ENCODE measurements at regions of chr9 and their contacts with region 1.

Region 1: DNA sequence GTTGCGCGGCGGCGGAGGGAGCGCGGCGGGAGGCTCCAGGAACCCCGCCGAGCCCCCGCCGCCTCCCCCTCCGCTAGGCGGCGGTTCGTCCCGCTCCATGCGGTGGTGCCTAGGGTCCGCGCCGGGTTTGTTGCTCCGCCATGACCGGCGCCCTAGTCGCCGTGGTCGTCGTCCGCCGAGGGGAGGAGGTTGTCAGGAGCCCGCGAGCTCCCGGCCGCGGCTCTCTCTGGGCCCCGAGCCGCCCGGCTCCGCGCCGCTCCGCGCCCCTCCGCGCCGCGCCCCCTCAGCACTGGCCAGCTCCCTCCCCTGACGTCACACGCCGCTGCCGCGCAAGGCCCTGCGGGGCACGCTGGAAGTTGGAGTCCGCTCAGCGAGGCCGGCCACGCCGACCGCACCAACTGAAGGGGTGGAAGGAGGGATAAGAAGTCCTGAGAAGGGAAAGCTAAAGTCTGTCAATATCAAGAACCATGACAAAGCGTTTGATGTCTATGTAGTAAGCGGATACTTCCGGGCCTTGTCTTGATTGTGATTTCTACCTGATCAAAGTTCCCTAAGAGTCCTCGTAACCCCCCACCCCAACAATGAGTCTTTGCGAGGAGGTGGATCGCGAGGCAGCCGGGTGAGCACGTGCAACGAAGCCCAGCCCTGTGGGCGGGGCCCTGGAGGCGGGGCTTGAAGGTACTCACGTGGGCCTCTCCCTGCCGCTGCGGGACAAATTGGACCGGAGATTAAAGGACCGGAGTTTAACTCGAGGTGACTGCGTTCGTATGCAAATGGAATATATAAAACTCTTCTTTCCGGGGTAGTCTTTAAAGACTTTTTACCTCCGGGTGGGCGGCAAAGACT is at the start of gene NR6A1:
- DNase-seq: peak; percentile 63
- H3K4me3 ChIP-seq: peak within 1 kb of the TSS; percentile 65
- CTCF ChIP-seq: peak; percentile 35

Region 2: DNA sequence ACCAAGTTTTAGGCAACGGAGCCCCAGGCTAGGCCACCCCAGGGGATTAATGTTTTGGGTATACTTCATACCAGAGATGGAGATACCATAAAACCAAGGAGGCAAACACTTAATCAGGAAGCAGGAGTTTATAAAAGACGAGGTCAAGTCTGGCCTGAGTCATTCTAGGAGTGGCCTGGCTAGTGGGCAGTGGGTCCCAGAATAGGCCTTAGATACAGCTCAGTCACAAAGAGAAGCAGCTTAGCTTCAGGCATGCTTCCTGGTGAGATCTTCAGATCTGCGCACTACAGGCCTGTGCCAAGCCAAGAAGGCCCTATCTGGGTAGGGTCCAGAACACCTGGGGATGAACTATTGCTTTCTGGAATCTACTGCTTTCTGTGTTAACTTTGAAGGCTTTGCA is 243.5 kb before region 1 on chr9:
- CTCF ChIA-PET with region 1: no interaction called
- POLR2A ChIA-PET with region 1: no interaction called
- DNase-seq: no peak
- H3K4me3 ChIP-seq: no peak overlapping the region
- CTCF ChIP-seq: no peak

Region 3: GRCh38 chr9:124754289-124754688 is 17.0 kb before region 1 on chr9:
- CTCF ChIA-PET with region 1: interaction called, 34 read pairs
- POLR2A ChIA-PET with region 1: no interaction called
- DNase-seq: no peak
- H3K4me3 ChIP-seq: no peak overlapping the region
- CTCF ChIP-seq: peak; percentile 62

Region 4: DNA sequence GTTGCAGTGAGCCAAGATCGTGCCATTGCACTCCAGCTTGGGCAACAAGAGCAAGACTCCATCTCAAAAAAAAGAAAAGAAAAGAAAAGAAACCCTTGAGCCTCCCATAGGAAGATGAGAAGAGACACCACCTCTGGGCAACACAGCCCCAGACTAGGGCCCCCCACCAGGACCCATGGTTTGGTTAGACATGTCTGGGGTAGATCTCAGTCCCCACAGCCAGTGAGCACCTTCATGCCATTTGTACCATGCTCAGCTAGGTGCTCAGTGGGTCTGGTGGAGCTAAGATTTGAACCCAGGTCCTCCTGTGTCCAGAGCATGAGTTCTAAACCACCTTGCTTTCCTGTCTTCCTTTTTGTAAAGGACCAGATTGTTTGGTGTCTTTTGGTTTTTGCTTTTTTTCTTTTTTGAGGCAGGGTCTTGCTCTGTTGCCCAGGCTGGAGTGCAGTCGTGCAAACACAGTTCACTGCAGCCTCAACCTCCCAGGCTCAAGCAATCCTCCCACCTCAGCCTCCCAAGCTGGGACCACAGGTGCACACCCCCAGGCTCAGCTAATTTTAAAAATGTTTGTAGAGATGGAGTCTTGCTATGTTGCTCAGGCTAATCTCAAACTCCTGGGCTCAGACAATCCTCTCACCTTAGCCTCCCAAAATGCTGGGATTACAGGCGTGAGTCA is 17.4 kb after region 1 on chr9:
- CTCF ChIA-PET with region 1: interaction called, 138 read pairs
- POLR2A ChIA-PET with region 1: no interaction called
- DNase-seq: no peak
- H3K4me3 ChIP-seq: no peak overlapping the region
- CTCF ChIP-seq: no peak

Region 5: DNA sequence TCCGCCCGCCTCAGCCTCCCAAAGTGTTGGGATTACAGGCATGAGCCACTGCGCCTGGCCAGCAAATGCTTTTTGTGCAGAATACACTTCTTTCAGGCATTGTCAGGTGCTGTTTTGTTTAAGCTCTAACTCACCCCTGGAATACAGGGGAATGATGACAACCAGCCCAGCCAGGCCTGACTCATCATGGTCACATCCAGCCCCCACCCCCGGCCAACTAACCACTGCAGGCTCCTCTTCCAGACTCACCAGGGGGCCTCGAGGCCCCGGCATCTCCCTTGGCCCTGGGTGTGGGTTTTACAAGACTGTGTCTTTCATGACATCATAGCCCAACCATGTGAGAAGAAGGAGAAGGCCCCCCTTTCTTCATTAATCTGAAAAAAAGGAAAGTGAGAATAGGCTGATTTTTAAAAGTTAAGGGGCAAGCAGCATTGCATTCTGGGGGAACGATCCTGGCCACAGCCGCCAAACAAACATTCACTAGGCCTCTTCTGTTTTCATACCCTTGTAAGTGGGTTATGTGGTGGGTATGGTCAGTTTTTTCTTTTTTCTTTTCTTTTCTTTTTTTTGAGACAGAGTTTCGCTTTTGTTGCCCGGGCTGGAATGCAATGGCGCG is 41.3 kb after region 1 on chr9:
- CTCF ChIA-PET with region 1: interaction called, 85 read pairs
- POLR2A ChIA-PET with region 1: no interaction called
- DNase-seq: peak; percentile 92
- H3K4me3 ChIP-seq: no peak overlapping the region
- CTCF ChIP-seq: peak; percentile 15

Region 6: GRCh38 chr9:124861342-124862229 is 90.3 kb after region 1 on chr9 and contains the starts of genes ARPC5L and RPL35:
- CTCF ChIA-PET with region 1: interaction called, 2,098 read pairs
- POLR2A ChIA-PET with region 1: interaction called, 7 read pairs
- DNase-seq: no peak
- H3K4me3 ChIP-seq: peak within 1 kb of the TSS; percentile 80
- CTCF ChIP-seq: no peak

Region 7: GRCh38 chr9:124894741-124895170 is 123.5 kb after region 1 on chr9:
- CTCF ChIA-PET with region 1: interaction called, 61 read pairs
- POLR2A ChIA-PET with region 1: no interaction called
- DNase-seq: no peak
- H3K4me3 ChIP-seq: no peak overlapping the region
- CTCF ChIP-seq: peak; percentile 52

Region 8: GRCh38 chr9:124960409-124960752 is 189.1 kb after region 1 on chr9:
- CTCF ChIA-PET with region 1: no interaction called
- POLR2A ChIA-PET with region 1: no interaction called
- DNase-seq: no peak
- H3K4me3 ChIP-seq: no peak overlapping the region
- CTCF ChIP-seq: no peak

Measured in AG04449 (cell line).